Naive thymus-derived CD4-positive, alpha-beta T cell (primary cell): ENCODE measurements at regions of chr11 and their contacts with region 1.

Region 1: DNA sequence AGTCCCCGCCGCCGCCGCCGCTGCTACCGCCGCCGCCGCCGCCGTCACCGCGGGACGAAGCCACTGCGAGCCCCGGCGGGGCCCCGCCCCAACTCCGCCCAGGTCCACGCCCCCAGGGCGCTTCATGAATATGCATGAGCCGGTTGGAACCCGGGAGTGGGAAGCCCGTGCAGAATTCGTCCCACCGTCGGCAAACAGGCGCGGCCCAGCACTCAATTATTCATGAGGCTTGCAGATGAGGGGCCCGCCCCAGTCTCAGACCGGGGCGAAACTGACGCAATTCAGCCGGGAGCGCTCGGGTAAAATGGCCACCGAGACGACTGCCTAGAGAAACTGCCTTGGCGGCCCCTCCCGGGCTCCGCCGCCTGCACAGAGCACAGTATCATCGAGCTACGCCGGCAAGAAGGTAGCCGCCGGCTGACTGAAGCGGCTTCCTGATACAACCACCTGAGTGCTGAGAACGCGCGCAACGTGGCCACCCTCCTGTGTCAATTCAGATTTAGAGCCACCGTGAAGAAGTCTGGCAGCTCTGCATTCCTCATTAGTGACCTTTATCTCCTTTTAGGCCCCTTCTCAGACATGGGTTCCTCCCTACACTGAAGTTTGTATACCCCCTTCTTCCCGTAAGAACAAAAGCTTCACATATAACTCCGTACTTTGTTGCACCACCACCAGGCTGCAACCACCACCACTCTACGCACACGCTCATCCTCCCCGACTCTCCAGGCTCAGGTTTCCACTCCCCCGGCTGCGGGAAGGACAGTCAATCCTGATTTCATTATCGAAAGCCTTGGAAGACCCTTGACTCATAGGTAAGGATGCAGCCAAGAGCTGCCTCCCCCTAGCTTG is at the start of gene TNKS1BP1:
- DNase-seq: peak; percentile 84 to 92 (median 90)
- ATAC-seq: peak; percentile 91
- H3K4me3 ChIP-seq: peak within 1 kb of the TSS; percentile 73
- H3K4me3 Mint-ChIP-seq: peak within 1 kb of the TSS; percentile 88 to 95 (median 91)
- H3K27ac ChIP-seq: peak within 1 kb of the TSS; percentile 79
- H3K27ac Mint-ChIP-seq: peak within 1 kb of the TSS; percentile 93 to 98 (median 95)
- H3K4me1 ChIP-seq: peaks cover 8 to 14% of the 10 kb centered on the region in 2 donors
- H3K4me1 Mint-ChIP-seq: peaks cover 30 to 58% (median 51%) of the 10 kb centered on the region in 7 donors
- H3K27me3 ChIP-seq: no peaks in the 10 kb centered on the region
- H3K27me3 Mint-ChIP-seq: no peaks in the 10 kb centered on the region
- total RNA-seq, gene TNKS1BP1: 11.2 to 22.0 (median 15.9) TPM

Region 2: DNA sequence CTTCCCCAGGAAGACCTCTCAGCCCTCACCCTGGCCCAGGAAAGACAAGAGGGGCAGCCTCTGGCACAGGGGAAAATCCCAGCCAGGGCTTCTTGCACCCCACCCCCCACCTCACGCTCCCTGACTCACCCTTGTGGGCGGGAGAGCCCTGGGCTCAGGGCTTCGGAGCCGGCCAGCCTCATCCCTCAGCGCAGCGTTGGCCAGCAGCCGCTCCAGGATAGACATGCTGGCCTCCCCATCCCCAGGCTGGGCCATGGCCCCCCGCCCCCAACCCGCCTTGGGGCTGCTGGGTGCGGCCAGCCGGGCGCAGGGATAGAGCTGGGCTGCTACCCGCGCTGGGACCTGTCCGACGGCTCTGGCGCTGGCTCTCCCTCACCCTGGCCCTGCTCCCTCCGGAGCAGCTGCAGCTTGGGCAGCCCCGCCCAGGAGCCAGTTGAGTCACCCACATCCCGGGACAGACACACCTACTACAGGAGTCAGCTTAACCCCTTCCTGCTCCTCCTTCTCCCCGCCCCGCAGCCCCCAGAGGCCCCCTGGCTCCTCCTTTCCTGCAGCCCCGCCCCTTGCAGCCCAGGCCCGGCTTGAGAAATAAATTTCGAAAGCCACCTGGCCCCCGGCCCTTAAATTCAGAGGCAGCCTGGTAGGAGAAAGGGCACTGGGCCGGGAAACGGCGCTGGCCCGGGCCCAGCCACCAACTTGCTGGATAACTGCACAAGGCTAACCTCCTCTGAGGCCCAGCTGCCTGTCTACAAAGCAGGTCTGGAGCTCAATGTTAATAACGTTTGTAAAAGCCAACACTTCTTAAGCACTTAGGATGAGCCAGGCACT is 13.8 kb before region 1 on chr11:
- CTCF ChIA-PET with region 1: no interaction called
- POLR2A ChIA-PET with region 1: interaction called, 4 read pairs
- intact Hi-C with region 1: loop called in 1 of 2 experiments (anchors 1 kb)
- DNase-seq: peak in 3 of 9 donors; percentile 10 to 73 (median 11)
- ATAC-seq: peak; percentile 72
- H3K4me3 ChIP-seq: peak overlapping the region; percentile 24
- H3K4me3 Mint-ChIP-seq: peak overlapping the region in 8 of 10 donors; percentile 35 to 73 (median 54)
- H3K27ac ChIP-seq: no peak overlapping the region
- H3K27ac Mint-ChIP-seq: peak overlapping the region in 2 of 9 donors; percentile 41 to 66
- H3K4me1 ChIP-seq: peaks cover 0 to 8% of the 10 kb centered on the region in 2 donors
- H3K4me1 Mint-ChIP-seq: peaks cover 7 to 14% (median 13%) of the 10 kb centered on the region in 7 donors
- H3K27me3 ChIP-seq: no peaks in the 10 kb centered on the region
- H3K27me3 Mint-ChIP-seq: no peaks in the 10 kb centered on the region

Region 3: GRCh38 chr11:57335343-57336110 is 10.4 kb after region 1 on chr11 and contains the start of gene SSRP1:
- CTCF ChIA-PET with region 1: interaction called, 4 read pairs
- POLR2A ChIA-PET with region 1: interaction called, 94 read pairs
- intact Hi-C with region 1: loop called (anchors 1 kb)
- DNase-seq: peak; percentile 64 to 90 (median 85)
- ATAC-seq: peak; percentile 99
- H3K4me3 ChIP-seq: peak within 1 kb of the TSS; percentile 77
- H3K4me3 Mint-ChIP-seq: peak within 1 kb of the TSS; percentile 91 to 98 (median 96)
- H3K27ac ChIP-seq: peak within 1 kb of the TSS; percentile 91
- H3K27ac Mint-ChIP-seq: peak within 1 kb of the TSS; percentile 96 to 100 (median 99)
- H3K4me1 ChIP-seq: peaks cover 15 to 19% of the 10 kb centered on the region in 2 donors
- H3K4me1 Mint-ChIP-seq: peaks cover 18 to 44% (median 35%) of the 10 kb centered on the region in 7 donors
- H3K27me3 ChIP-seq: no peaks in the 10 kb centered on the region
- H3K27me3 Mint-ChIP-seq: peaks cover 0 to 2% (median 0%) of the 10 kb centered on the region in 5 donors
- total RNA-seq, gene SSRP1: 46.9 to 146 (median 70.1) TPM

Region 4: DNA sequence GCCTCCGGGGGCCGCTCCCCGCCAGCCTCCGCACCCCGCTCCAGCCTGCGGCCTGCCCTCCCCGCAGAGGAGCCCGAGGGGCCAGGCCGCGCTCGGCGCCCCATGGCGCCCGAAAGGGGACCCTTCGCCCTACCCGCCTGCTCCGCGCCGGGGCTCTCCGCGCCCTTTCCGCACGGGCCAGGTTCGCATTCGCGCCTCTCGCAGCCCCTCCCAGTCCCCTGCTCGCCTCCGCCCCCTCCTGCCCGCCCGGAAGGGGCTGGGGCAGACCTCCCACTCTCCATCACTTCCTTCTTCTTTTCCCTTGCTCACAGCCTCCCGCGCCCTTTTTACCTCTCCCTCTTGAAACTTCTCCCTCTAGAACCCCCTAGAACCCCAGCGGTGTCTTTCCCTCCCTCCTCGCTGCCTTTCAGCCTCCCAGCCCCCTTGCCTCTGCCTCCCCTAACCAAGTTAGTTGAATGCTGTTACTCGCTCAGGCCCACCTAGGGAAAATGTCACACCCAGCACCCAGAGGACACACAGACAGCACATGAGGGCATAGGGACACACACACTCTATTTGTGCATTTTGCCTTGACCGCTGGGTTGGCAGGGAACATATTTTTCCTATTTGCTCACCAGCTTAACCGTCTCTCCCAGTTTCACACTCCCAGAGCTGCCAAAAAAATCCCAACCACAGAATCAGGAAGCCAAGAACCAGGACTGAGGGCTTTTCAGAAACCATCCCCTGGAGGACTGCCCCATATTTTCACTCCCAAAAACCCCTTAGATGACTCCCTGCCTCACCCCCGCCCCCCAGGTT is 102.0 kb after region 1 on chr11 and contains the start of gene SLC43A3:
- CTCF ChIA-PET with region 1: no interaction called
- POLR2A ChIA-PET with region 1: no interaction called
- intact Hi-C with region 1: loop called in 1 of 2 experiments (anchors 1 kb)
- DNase-seq: peak; percentile 18 to 79 (median 38)
- ATAC-seq: peak; percentile 63
- H3K4me3 ChIP-seq: peak within 1 kb of the TSS; percentile 56
- H3K4me3 Mint-ChIP-seq: peak within 1 kb of the TSS; percentile 83 to 92 (median 89)
- H3K27ac ChIP-seq: peak within 1 kb of the TSS; percentile 62
- H3K27ac Mint-ChIP-seq: peak within 1 kb of the TSS; percentile 52 to 93 (median 82)
- H3K4me1 ChIP-seq: peaks cover 24 to 36% of the 10 kb centered on the region in 2 donors
- H3K4me1 Mint-ChIP-seq: peaks cover 40 to 55% (median 50%) of the 10 kb centered on the region in 7 donors
- H3K27me3 ChIP-seq: no peaks in the 10 kb centered on the region
- H3K27me3 Mint-ChIP-seq: peaks cover 0 to 24% (median 0%) of the 10 kb centered on the region in 5 donors
- total RNA-seq, gene SLC43A3: 10.5 to 67.9 (median 12.2) TPM

Region 5: DNA sequence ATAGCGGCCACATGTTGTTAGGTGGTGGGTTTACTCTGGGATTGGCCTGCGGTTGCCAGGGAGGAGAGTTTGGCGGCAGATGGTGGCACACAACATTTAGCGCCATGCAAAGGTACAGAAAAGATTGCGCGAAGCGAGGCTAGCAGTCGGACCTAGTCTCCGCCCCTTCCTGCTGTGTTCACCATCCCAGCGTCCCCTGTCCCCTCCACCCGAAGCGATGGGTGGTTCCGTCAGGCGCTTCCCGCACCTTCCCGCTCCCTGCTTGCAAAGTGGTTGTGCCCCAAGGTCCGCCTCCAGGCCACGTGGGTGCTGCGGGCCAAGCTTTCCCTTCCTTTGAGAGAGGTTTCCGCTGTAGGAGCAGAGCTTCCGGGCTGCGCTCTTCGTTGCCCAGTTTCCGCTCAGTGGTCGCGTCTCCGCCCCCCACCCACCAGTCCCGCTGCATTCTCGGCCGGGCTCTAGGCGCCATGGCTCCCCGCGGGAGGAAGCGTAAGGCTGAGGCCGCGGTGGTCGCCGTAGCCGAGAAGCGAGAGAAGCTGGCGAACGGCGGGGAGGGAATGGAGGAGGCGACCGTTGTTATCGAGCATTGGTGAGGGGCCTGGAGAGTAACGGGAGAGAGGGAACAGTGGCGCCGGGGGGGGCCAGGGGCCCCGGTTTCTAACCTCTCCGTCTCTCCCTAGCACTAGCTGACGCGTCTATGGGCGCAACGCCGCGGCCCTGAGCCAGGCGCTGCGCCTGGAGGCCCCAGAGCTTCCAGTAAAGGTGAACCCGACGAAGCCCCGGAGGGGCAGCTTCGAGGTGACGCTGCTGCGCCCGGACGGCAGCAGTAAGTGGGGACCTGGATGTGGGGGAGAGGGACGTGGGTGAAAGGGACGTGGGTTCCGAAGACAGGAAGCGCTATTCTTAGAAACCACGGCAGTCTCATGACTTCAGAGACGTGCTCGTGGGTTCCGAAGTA is 416.3 kb after region 1 on chr11 and contains the start of gene SELENOH:
- CTCF ChIA-PET with region 1: no interaction called
- POLR2A ChIA-PET with region 1: no interaction called
- intact Hi-C with region 1: loop called in 1 of 2 experiments (anchors 1 kb)
- DNase-seq: peak; percentile 75 to 96 (median 91)
- ATAC-seq: peak; percentile 94
- H3K4me3 ChIP-seq: peak within 1 kb of the TSS; percentile 86
- H3K4me3 Mint-ChIP-seq: peak within 1 kb of the TSS; percentile 90 to 100 (median 99)
- H3K27ac ChIP-seq: peak within 1 kb of the TSS; percentile 93
- H3K27ac Mint-ChIP-seq: peak within 1 kb of the TSS; percentile 97 to 100 (median 98)
- H3K4me1 ChIP-seq: peaks cover 16 to 23% of the 10 kb centered on the region in 2 donors
- H3K4me1 Mint-ChIP-seq: peaks cover 12 to 50% (median 41%) of the 10 kb centered on the region in 7 donors
- H3K27me3 ChIP-seq: no peaks in the 10 kb centered on the region
- H3K27me3 Mint-ChIP-seq: no peaks in the 10 kb centered on the region
- total RNA-seq, gene SELENOH: 93.6 to 193 (median 124) TPM

Region 6: GRCh38 chr11:57792060-57792541 is 467.0 kb after region 1 on chr11:
- CTCF ChIA-PET with region 1: no interaction called
- POLR2A ChIA-PET with region 1: no interaction called
- intact Hi-C with region 1: loop called in 1 of 2 experiments (anchors 5 kb)
- DNase-seq: peak; percentile 69 to 93 (median 90)
- ATAC-seq: peak; percentile 96
- H3K4me3 ChIP-seq: peak overlapping the region; percentile 15
- H3K4me3 Mint-ChIP-seq: peak overlapping the region; percentile 55 to 88 (median 77)
- H3K27ac ChIP-seq: peak overlapping the region; percentile 83
- H3K27ac Mint-ChIP-seq: peak overlapping the region; percentile 90 to 99 (median 99)
- H3K4me1 ChIP-seq: peaks cover 21 to 29% of the 10 kb centered on the region in 2 donors
- H3K4me1 Mint-ChIP-seq: peaks cover 37 to 53% (median 44%) of the 10 kb centered on the region in 7 donors
- H3K27me3 ChIP-seq: no peaks in the 10 kb centered on the region
- H3K27me3 Mint-ChIP-seq: peaks cover 0 to 2% (median 0%) of the 10 kb centered on the region in 5 donors